Activated naive CD8-positive, alpha-beta T cell treated with anti-CD3 and anti-CD28 coated beads, Interleukin-2, amount 10 ng/mL, durations not matched to agents 7 days and 5 days (primary cell): ENCODE measurements at regions of chr6 and their contacts with region 1.

Region 1: GRCh38 chr6:144063744-144064401 is 31.5 kb downstream of the SF3B5 start:
- DNase-seq: peak; percentile 95
- ATAC-seq: peak; percentile 93
- H3K4me3 Mint-ChIP-seq: peak overlapping the region; percentile 90
- H3K27ac Mint-ChIP-seq: peak overlapping the region; percentile 70
- H3K4me1 Mint-ChIP-seq: peaks cover 40% of the 10 kb centered on the region
- H3K27me3 Mint-ChIP-seq: no peaks in the 10 kb centered on the region

Region 2: DNA sequence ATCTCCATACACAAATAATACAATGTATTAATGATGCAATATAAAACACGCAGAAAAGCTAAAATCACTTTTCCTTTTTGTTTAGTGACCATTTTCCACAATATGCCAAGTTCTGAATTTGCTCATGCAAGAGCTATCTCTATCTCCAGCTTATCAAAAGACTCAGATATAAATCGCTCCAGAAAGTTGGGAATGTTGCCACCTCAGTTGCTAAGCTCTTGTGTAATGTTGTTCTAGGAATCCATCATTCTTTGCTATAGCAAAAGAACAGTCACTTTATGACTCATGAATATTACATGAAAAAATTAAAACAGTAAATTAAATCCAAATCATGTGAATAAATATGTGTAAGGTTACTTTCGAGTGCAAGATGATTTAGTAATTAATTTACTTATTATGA is 64.5 kb before region 1 on chr6:
- POLR2A ChIA-PET with region 1: no interaction called
- DNase-seq: no peak
- ATAC-seq: no peak
- H3K4me3 Mint-ChIP-seq: no peak overlapping the region
- H3K27ac Mint-ChIP-seq: no peak overlapping the region
- H3K4me1 Mint-ChIP-seq: no peaks in the 10 kb centered on the region
- H3K27me3 Mint-ChIP-seq: peaks cover 5% of the 10 kb centered on the region

Region 3: GRCh38 chr6:144017166-144018094 is 46.4 kb before region 1 on chr6:
- POLR2A ChIA-PET with region 1: no interaction called
- DNase-seq: no peak
- ATAC-seq: no peak
- H3K4me3 Mint-ChIP-seq: no peak overlapping the region
- H3K27ac Mint-ChIP-seq: no peak overlapping the region
- H3K4me1 Mint-ChIP-seq: peaks cover 2% of the 10 kb centered on the region
- H3K27me3 Mint-ChIP-seq: peaks cover 7% of the 10 kb centered on the region

Region 4: DNA sequence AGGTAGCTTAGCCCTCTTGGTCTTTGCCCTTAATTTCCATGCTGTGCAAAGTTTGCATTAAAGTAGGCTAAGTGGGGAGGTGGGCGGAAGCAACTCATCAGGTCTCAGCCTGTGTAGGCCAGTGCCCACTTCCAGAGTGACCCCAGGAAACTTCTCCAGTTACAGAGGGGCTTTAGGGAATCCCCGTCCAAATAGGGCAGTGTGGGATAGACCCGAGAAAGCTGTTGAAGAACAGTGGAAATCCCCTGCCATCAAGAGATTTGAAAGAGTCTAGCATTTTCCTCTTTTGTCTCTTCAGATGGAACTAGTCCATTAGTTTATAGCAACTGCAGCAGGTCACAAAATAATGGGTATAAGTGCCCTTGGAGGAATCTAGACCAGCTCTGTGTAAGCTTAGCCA is 11.3 kb after region 1 on chr6:
- POLR2A ChIA-PET with region 1: interaction called, 15 read pairs
- DNase-seq: no peak
- ATAC-seq: no peak
- H3K4me3 Mint-ChIP-seq: no peak overlapping the region
- H3K27ac Mint-ChIP-seq: no peak overlapping the region
- H3K4me1 Mint-ChIP-seq: no peaks in the 10 kb centered on the region
- H3K27me3 Mint-ChIP-seq: peaks cover 8% of the 10 kb centered on the region

Region 5: GRCh38 chr6:144095331-144096002 is 31.6 kb after region 1 on chr6 and contains the start of gene SF3B5:
- POLR2A ChIA-PET with region 1: interaction called, 28 read pairs
- DNase-seq: peak; percentile 93
- ATAC-seq: peak; percentile 95
- H3K4me3 Mint-ChIP-seq: peak within 1 kb of the TSS; percentile 99
- H3K27ac Mint-ChIP-seq: peak within 1 kb of the TSS; percentile 99
- H3K4me1 Mint-ChIP-seq: peaks cover 18% of the 10 kb centered on the region
- H3K27me3 Mint-ChIP-seq: no peaks in the 10 kb centered on the region
- total RNA-seq, gene SF3B5: 127 to 133 TPM